CD4-positive, alpha-beta T cell (primary cell): ENCODE measurements at regions of chr17 and their contacts with region 1.

Region 1: DNA sequence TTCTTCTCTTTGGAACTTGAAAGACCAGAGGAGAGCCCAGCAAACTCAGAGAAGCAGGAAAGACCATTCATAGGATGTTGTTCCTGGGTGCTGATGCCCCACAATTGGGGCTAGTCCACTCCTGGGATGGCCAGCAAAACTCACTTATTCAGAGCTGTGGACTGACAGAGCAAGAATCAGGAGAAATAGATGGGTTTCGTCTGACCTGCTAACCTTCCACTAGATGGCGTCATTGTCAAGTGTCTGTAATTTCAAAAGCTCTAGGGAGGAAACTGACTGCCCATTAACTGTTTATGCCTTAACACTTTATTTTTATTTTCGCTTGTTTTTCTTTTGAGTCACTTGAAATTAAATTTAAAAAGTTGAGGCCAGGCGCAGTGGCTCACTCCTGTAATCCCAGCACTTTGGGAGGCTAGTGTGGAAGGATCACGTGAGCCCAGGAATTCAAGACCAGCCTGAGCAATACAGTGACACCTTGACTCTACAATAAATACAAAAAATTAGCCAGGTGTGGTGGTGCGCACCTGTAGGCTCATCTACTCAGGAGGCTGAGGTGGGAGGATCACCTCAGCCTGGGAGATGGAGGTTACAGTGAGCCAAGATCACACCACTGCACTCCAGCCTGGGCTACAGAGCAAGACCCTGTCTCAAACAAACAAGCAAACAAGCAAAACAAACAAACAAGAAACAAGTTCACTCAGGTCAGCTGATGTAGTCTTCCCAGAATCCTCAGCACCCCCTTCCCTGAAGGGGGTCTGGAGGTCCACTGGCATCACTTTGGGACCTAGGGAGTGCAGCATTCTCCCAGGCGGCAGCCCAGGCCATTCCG is 28.6 kb upstream of the MILR1 start:
- DNase-seq: peak in 7 of 14 experiments; percentile 15 to 85 (median 44)
- ATAC-seq: peak; percentile 81
- H3K4me3 ChIP-seq: no peak overlapping the region
- H3K4me3 Mint-ChIP-seq: no peak overlapping the region
- H3K27ac ChIP-seq: no peak overlapping the region
- H3K27ac Mint-ChIP-seq: no peak overlapping the region
- H3K4me1 ChIP-seq: peaks cover 5% of the 10 kb centered on the region
- H3K4me1 Mint-ChIP-seq: peaks cover 5% of the 10 kb centered on the region
- H3K27me3 ChIP-seq: no peaks in the 10 kb centered on the region
- H3K27me3 Mint-ChIP-seq: no peaks in the 10 kb centered on the region
- CTCF ChIP-seq: peak; percentile 89

Region 2: GRCh38 chr17:64320613-64321553 is 99.5 kb before region 1 on chr17:
- CTCF ChIA-PET with region 1: interaction called, 23 read pairs
- POLR2A ChIA-PET with region 1: interaction called, 3 read pairs
- intact Hi-C with region 1: loop called (anchors 1 kb)
- DNase-seq: peak; percentile 25 to 82 (median 46)
- ATAC-seq: peak; percentile 69
- H3K4me3 ChIP-seq: peak overlapping the region; percentile 14
- H3K4me3 Mint-ChIP-seq: no peak overlapping the region
- H3K27ac ChIP-seq: no peak overlapping the region
- H3K27ac Mint-ChIP-seq: peak overlapping the region; percentile 35
- H3K4me1 ChIP-seq: peaks cover 9% of the 10 kb centered on the region
- H3K4me1 Mint-ChIP-seq: peaks cover 17% of the 10 kb centered on the region
- H3K27me3 ChIP-seq: no peaks in the 10 kb centered on the region
- H3K27me3 Mint-ChIP-seq: peaks cover 4% of the 10 kb centered on the region
- CTCF ChIP-seq: peak; percentile 85

Region 3: GRCh38 chr17:64378890-64379354 is 41.4 kb before region 1 on chr17:
- CTCF ChIA-PET with region 1: no interaction called
- POLR2A ChIA-PET with region 1: no interaction called
- intact Hi-C with region 1: no loop called
- DNase-seq: no peak
- ATAC-seq: no peak
- H3K4me3 ChIP-seq: no peak overlapping the region
- H3K4me3 Mint-ChIP-seq: no peak overlapping the region
- H3K27ac ChIP-seq: no peak overlapping the region
- H3K27ac Mint-ChIP-seq: no peak overlapping the region
- H3K4me1 ChIP-seq: peaks cover 4% of the 10 kb centered on the region
- H3K4me1 Mint-ChIP-seq: no peaks in the 10 kb centered on the region
- H3K27me3 ChIP-seq: no peaks in the 10 kb centered on the region
- H3K27me3 Mint-ChIP-seq: no peaks in the 10 kb centered on the region
- CTCF ChIP-seq: no peak

Region 4: DNA sequence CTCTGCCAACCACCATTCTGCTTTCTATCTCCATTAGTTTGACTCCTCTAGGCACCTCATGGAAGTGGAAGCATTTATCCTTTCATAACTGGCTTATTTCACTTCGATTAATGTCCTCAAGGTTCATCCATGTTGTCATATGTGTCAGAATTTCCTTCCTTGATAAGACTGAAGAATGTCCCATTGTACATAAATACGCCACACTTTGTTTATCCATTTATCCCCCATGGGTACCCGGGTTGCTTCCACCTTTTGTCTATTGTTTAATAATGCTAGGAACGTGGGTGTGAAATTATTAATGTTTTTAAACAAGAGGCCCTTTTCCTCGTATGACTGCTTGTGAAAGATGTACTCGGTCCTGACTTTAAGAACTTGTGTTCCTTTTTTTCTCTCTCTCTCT is 41.4 kb after region 1 on chr17:
- CTCF ChIA-PET with region 1: no interaction called
- POLR2A ChIA-PET with region 1: no interaction called
- intact Hi-C with region 1: no loop called
- DNase-seq: no peak
- ATAC-seq: no peak
- H3K4me3 ChIP-seq: no peak overlapping the region
- H3K4me3 Mint-ChIP-seq: no peak overlapping the region
- H3K27ac ChIP-seq: no peak overlapping the region
- H3K27ac Mint-ChIP-seq: no peak overlapping the region
- H3K4me1 ChIP-seq: peaks cover 12% of the 10 kb centered on the region
- H3K4me1 Mint-ChIP-seq: peaks cover 16% of the 10 kb centered on the region
- H3K27me3 ChIP-seq: peaks cover 0 to 2% of the 10 kb centered on the region in 2 experiments
- H3K27me3 Mint-ChIP-seq: no peaks in the 10 kb centered on the region
- CTCF ChIP-seq: no peak

Region 5: DNA sequence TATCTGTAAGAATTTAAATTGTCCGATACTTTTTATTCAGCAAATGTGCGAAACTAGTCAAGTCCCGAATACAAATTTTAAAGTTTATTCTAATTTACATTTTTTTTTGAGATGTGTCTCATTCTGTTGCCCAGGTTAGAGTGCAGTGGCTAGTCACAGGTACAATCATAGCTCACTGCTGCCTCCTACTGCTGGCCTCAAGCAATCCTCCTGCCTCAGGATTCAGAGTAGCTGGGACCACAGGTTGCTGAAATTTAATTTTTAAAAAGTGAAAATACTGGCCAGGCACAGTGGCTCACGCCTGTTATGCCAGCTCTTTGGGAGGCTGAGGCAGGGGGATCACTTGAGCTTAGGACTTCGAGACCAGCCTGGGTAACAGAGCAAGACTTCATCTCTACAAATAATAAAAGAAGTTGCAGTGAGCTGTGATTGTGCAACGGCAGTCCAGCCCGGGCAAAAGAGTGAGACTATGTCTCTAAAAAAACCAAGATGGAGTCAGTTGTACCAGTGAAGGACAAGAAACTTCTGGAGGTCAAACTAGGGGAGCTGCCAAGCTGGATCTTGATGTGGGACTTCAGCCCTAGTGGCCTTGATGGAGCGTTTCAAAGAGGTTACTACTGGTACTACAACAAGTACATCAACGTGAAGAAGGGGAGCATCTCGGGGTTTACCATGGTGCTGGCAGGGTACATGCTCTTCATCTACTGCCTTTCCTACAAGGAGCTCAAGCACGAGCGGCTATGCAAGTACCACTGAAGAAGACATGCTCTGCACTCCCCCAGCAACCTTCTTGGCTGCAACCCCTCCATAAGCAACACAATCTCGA is 70.9 kb after region 1 on chr17:
- CTCF ChIA-PET with region 1: interaction called, 61 read pairs
- POLR2A ChIA-PET with region 1: interaction called, 14 read pairs
- intact Hi-C with region 1: loop called (anchors 1 kb)
- DNase-seq: peak in 13 of 14 experiments; percentile 22 to 78 (median 37)
- ATAC-seq: peak; percentile 75
- H3K4me3 ChIP-seq: no peak overlapping the region
- H3K4me3 Mint-ChIP-seq: no peak overlapping the region
- H3K27ac ChIP-seq: no peak overlapping the region
- H3K27ac Mint-ChIP-seq: no peak overlapping the region
- H3K4me1 ChIP-seq: peaks cover 23% of the 10 kb centered on the region
- H3K4me1 Mint-ChIP-seq: peaks cover 25% of the 10 kb centered on the region
- H3K27me3 ChIP-seq: no peaks in the 10 kb centered on the region
- H3K27me3 Mint-ChIP-seq: no peaks in the 10 kb centered on the region
- CTCF ChIP-seq: peak; percentile 69

Region 6: DNA sequence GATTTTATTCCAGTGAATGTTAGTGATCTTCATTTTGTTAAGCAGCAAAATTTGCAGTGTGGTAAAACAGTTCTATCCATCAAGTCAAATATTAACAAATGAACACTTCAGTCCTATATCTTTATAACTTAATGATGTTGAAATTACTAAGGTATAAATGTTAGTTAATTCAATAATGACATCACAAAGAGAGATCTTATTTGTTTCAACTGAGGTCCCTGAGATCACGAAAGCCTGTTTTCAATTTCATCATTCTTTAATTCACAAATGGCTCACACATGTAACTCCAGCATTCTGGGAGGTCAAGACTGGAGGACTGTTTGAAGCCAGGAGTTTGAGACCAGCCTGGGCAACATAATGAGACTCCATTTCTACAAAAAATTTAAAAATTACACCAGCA is 227.9 kb after region 1 on chr17:
- CTCF ChIA-PET with region 1: interaction called, 6 read pairs
- POLR2A ChIA-PET with region 1: no interaction called
- intact Hi-C with region 1: loop called (anchors 1 to 2 kb)
- DNase-seq: no peak
- ATAC-seq: no peak
- H3K4me3 ChIP-seq: no peak overlapping the region
- H3K4me3 Mint-ChIP-seq: no peak overlapping the region
- H3K27ac ChIP-seq: no peak overlapping the region
- H3K27ac Mint-ChIP-seq: no peak overlapping the region
- H3K4me1 ChIP-seq: peaks cover 3% of the 10 kb centered on the region
- H3K4me1 Mint-ChIP-seq: peaks cover 59% of the 10 kb centered on the region
- H3K27me3 ChIP-seq: no peaks in the 10 kb centered on the region
- H3K27me3 Mint-ChIP-seq: no peaks in the 10 kb centered on the region
- CTCF ChIP-seq: no peak

Region 7: DNA sequence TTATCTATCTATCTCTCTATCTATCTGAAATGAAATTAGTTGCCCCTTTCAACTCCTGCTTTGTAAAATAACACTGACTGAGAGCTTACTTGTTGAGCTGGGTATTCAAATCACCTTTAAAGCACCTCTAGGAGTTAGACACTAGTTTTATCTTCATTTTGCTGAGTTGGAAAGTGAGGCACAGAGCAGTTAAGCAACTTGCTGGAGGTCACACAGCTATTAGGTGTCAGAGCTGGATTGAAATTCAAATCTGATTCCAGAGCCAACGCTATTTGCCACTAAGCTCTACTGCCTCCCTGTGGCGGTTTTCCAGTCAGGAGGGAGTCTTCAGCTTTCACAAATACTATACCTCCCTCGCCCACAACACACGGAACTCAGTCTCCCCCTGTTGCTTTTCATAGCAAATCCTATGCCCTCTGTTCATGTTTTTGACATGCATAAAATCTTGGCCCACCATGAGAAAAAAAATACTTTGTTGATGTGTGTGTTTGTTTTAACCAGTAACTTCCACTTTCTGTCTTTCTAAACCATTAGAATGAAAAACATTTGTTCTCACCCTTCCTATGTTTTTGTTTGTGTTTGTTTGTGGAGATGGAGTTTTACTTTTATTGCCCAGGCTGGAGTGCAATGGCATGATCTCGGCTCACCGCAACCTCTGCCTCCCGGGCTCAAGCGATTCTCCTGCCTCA is 316.6 kb after region 1 on chr17:
- CTCF ChIA-PET with region 1: interaction called, 3 read pairs
- POLR2A ChIA-PET with region 1: no interaction called
- intact Hi-C with region 1: loop called (anchors 1 to 2 kb)
- DNase-seq: peak; percentile 31 to 65 (median 48)
- ATAC-seq: peak; percentile 88
- H3K4me3 ChIP-seq: no peak overlapping the region
- H3K4me3 Mint-ChIP-seq: no peak overlapping the region
- H3K27ac ChIP-seq: no peak overlapping the region
- H3K27ac Mint-ChIP-seq: no peak overlapping the region
- H3K4me1 ChIP-seq: no peaks in the 10 kb centered on the region
- H3K4me1 Mint-ChIP-seq: peaks cover 12% of the 10 kb centered on the region
- H3K27me3 ChIP-seq: no peaks in the 10 kb centered on the region
- H3K27me3 Mint-ChIP-seq: no peaks in the 10 kb centered on the region
- CTCF ChIP-seq: peak; percentile 74